HCT116 (cell line): ENCODE measurements at regions of chr9 and their contacts with region 1.

Region 1: DNA sequence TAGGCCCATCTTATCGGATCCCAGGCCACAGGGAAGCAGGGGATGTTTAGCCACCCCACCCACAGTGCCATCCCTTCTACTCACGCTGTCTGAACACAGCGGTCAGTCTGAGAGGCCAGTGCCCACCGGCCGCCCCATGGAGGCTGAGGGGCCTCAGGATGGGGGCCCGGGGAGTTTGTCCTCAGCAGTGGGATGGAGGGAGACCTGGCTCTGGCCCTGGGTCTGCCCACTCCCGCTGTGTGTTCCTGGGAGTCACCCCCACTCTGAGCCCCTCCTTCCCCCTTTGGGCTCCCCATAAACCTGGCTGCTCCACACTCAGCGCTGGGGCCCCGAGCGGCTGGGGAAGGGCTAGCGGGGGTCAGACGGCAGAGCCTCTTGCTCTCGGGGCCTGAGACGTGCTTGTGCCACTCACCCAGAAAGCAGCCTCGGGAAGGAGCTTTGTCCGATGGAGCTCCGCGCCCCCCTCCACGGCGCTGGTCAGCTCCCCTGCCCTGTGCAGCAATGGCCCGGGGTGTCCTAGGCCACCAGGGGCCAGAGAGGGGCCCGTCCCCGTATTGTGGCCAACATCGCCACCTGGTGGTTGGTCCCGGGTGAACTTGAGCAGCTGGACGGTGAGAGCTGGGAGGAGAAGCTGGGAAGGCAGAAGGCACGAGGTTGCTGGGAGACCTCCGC is 10.9 kb upstream of the LAMC3 start:
- DNase-seq: peak; percentile 60
- ATAC-seq: peak; percentile 93
- H3K4me3 ChIP-seq: no peak overlapping the region
- H3K27ac ChIP-seq: no peak overlapping the region
- H3K4me1 ChIP-seq: peaks cover 5 to 17% of the 10 kb centered on the region in 2 experiments; a peak in 3 of 4 replicates
- H3K27me3 ChIP-seq: no peaks in the 10 kb centered on the region; the same call in 1 of the 2 replicates
- CTCF ChIP-seq: peak; percentile 72 to 96 (median 90)
- POLR2A ChIP-seq: no peak
- RAD21 ChIP-seq: peak; percentile 98

Region 2: DNA sequence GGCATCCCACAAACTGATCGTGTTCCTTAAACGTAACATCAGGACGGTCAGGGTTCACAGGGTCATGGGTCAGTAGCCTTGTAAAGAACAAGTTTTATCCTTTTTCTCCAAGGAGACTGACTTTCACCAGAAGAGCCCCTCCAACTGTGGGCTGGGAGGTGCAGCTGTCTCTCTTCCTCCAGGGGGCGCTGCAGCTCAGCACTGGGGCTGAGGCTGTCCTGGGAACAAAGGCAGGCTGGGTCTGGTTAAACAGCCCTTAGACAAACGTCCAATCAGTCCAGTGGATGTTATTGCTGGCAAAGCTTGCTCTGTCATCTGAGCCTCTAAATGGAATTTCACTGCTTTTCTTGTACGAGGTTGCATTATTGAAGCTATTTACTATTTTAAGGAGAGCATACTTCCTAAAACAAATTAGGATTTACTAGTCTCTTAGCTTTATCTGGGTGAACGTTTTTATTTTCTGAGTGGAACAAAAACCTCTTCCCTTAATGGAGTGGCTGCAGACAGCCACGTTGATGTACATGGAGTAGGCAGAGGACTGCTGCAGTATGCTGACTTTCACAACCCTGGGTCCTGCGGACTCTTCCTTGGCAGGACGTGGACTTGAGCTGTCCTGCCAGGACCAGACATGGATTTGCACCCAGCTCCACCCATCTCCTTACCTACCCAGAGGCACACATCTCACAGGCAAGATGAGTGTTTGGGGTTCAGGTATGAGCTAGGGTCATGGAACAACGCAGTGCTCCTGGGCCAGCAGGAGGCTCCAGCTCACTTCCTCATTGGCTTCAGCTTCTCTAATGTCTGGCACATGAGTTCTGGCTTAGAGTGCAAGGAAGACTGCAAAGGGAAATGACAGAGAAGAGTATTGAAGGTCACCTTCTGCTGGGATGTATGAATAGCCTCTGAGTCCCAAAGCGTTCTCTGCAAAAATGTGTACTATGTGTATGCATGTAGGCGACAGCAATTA is 296.7 kb before region 1 on chr9:
- CTCF ChIA-PET with region 1: interaction called, 6 read pairs
- POLR2A ChIA-PET with region 1: no interaction called
- RAD21 ChIA-PET with region 1: no interaction called
- intact Hi-C with region 1: loop called (anchors 2 kb)
- DNase-seq: no peak
- ATAC-seq: peak; percentile 93
- H3K4me3 ChIP-seq: no peak overlapping the region
- H3K27ac ChIP-seq: no peak overlapping the region
- H3K4me1 ChIP-seq: peaks cover 3 to 7% of the 10 kb centered on the region in 2 experiments; a peak in 3 of 4 replicates
- H3K27me3 ChIP-seq: no peaks in the 10 kb centered on the region
- CTCF ChIP-seq: peak; percentile 65 to 99 (median 99); a peak in 5 of 6 replicates
- POLR2A ChIP-seq: no peak
- RAD21 ChIP-seq: peak; percentile 71

Region 3: DNA sequence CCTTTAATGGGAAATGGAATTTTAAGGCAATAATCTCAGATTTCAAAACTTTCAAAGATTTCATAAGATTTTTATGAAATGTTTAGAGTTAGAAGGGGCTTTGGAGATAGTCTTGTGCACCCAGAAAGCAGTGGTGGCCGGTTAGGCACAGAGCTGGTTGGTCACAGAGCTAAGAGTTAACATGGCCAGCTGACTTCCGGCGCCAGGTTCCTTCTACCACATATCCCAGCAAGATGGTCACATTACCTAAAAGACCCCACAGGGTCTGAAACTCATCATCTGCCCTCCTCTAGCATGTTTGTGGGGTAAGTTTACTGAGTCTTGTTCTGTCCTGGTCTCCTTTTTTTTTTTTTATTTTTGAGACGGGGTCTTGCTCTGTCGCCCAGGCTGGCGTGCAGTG is 120.8 kb before region 1 on chr9:
- CTCF ChIA-PET with region 1: interaction called, 58 read pairs
- POLR2A ChIA-PET with region 1: no interaction called
- RAD21 ChIA-PET with region 1: interaction called in 1 of 2 experiments, 3 read pairs
- intact Hi-C with region 1: no loop called
- DNase-seq: no peak
- ATAC-seq: no peak
- H3K4me3 ChIP-seq: no peak overlapping the region
- H3K27ac ChIP-seq: no peak overlapping the region
- H3K4me1 ChIP-seq: no peaks in the 10 kb centered on the region; a peak in 1 of 4 replicates
- H3K27me3 ChIP-seq: no peaks in the 10 kb centered on the region
- CTCF ChIP-seq: no peak
- POLR2A ChIP-seq: no peak
- RAD21 ChIP-seq: no peak

Region 4: DNA sequence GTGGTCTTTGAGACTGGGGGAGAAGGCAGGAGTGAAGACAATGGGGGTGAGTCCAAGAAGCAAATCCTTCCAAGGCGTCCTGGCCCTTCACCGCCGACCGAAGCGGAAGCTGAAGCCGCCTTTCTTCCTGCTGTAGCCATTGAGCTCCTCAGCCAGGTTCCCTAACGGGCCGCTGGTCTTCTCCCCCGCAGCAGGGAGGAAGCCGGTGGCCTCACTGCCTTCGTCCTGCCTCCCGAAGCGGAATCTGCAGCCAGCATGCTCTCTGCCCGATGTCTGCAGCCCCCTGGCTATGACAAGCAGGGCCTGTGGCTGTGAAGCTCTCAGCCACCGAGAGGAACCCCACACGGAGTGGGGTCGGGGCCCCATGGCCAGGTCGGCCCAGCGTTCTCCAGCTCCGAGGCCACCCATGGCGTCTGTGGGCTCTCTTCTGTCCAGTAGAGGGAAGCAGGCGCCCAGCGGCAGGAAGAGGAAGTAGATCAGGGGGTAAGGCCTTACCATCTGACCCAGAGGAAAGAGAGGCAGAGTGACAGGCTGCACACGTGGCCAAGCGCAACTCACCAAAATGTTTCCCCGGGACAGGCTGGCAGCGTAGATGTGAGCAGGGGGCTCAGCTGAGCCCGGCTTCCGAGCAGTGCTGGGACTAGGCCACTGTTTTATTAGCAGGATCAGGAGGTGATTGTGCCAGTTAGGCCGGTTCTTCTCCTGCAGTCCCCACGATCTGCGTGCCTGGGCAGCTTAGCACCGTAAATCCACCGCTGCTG is 104.5 kb before region 1 on chr9:
- CTCF ChIA-PET with region 1: interaction called, 21 read pairs
- POLR2A ChIA-PET with region 1: no interaction called
- RAD21 ChIA-PET with region 1: interaction called in 1 of 2 experiments, 3 read pairs
- intact Hi-C with region 1: loop called (anchors 2 kb)
- DNase-seq: no peak
- ATAC-seq: peak; percentile 39; the same call in 1 of the 2 replicates
- H3K4me3 ChIP-seq: no peak overlapping the region
- H3K27ac ChIP-seq: no peak overlapping the region
- H3K4me1 ChIP-seq: no peaks in the 10 kb centered on the region
- H3K27me3 ChIP-seq: no peaks in the 10 kb centered on the region
- CTCF ChIP-seq: peak; percentile 33 to 47 (median 46); a peak in 5 of 6 replicates
- POLR2A ChIP-seq: no peak
- RAD21 ChIP-seq: peak; percentile 80

Region 5: GRCh38 chr9:130927995-130928900 is 69.8 kb before region 1 on chr9:
- CTCF ChIA-PET with region 1: interaction called, 10 read pairs
- POLR2A ChIA-PET with region 1: no interaction called
- RAD21 ChIA-PET with region 1: interaction called, 3 to 4 read pairs
- intact Hi-C with region 1: no loop called
- DNase-seq: peak; percentile 55
- ATAC-seq: peak; percentile 69
- H3K4me3 ChIP-seq: peak overlapping the region; percentile 11 to 42; a peak in 2 of 4 replicates
- H3K27ac ChIP-seq: peak overlapping the region; percentile 81
- H3K4me1 ChIP-seq: peaks cover 29 to 33% of the 10 kb centered on the region in 2 experiments
- H3K27me3 ChIP-seq: no peaks in the 10 kb centered on the region
- CTCF ChIP-seq: no peak
- POLR2A ChIP-seq: no peak
- RAD21 ChIP-seq: no peak

Region 6: DNA sequence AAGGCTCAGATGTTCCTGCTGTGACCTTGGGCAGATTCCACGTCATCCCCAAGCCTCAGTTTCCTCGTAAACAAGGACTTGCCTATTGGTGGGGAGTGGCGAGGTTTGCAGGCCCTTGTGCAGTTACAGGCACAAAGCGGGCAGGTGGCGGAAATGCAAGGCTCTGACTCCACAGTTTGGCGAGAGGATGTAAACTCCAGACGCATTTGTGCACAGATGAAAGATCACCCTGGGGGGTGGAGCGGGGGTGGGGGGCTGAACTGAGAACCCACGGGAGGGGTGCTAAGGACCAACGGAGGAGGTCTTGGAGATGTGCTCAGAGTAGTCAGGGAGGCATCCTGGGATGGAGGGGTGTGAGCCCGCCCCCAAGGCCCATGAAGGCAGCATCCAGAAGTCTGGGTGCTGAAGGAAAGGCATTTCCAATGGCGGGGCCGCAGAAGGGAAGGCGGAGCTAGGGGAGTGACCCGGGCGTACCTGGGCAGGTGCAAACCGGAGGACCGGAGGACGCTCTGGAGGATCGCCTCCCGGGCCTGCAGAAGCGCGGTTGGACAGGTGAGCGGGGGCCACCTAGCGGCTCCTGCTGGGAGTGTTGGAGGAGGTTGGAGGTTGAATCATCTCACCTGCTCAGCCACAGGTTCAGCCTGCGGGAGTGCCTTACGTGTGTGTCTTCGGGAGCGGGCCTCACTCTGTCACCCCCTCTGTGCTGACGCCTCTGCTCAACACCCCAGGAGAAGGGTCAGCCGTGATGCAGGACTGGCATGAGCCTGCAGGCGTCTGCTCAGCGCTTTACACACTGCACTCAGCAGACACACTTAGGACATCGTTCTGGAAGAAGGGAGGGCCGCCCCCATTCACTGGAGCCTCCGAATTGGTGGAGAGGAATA is 57.1 kb before region 1 on chr9:
- CTCF ChIA-PET with region 1: interaction called, 5 read pairs
- POLR2A ChIA-PET with region 1: interaction called, 8 read pairs
- RAD21 ChIA-PET with region 1: interaction called, 3 to 4 read pairs
- intact Hi-C with region 1: loop called (anchors 1 kb)
- DNase-seq: peak; percentile 75
- ATAC-seq: peak; percentile 77
- H3K4me3 ChIP-seq: peak overlapping the region in 1 of 2 experiments; percentile 34; a peak in 3 of 4 replicates
- H3K27ac ChIP-seq: no peak overlapping the region
- H3K4me1 ChIP-seq: peaks cover 21 to 45% of the 10 kb centered on the region in 2 experiments
- H3K27me3 ChIP-seq: no peaks in the 10 kb centered on the region
- CTCF ChIP-seq: peak in 2 of 3 experiments; percentile 86 to 93; a peak in 4 of 6 replicates
- POLR2A ChIP-seq: no peak
- RAD21 ChIP-seq: no peak

Region 7: DNA sequence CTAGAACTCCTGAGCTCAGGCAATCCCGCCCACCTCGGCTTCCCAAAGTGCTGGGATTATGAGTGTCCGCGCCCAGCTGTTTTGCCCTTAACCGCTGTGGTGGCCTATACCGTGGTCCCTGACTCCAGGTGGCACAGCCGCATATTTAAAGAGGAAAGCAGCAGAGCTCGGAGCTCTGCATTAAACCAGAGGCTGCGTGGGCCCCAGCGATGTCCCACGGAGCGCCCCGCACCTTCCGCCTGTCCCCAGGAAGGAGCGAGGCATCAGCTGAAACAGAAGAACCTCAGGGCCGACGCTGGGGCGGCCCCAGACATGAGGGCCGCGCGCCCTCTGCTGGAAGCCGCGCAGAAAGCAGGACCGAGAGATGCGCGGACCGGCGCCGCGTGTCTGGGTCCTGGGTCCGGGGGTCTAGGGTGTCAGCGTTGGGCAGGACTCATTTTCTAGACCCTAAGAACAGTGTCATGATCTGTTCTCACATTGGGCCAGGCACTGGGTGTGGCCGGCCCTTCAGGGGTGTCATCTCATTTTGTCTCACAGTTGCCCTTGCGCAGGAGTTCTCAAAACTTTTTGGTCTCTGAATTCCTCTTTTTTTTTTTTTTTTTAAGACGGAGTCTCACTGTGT is 48.6 kb after region 1 on chr9:
- CTCF ChIA-PET with region 1: interaction called, 37 read pairs
- POLR2A ChIA-PET with region 1: no interaction called
- RAD21 ChIA-PET with region 1: interaction called, 3 to 14 read pairs
- intact Hi-C with region 1: no loop called
- DNase-seq: peak; percentile 37
- ATAC-seq: peak; percentile 89
- H3K4me3 ChIP-seq: peak overlapping the region; percentile 26 to 45
- H3K27ac ChIP-seq: 0 out of 2 replicates have a peak overlapping the region, but pooled peaks have one; percentile 27
- H3K4me1 ChIP-seq: peaks cover 12 to 22% of the 10 kb centered on the region in 2 experiments; a peak in 3 of 4 replicates
- H3K27me3 ChIP-seq: no peaks in the 10 kb centered on the region
- CTCF ChIP-seq: peak; percentile 91 to 93 (median 92)
- POLR2A ChIP-seq: no peak
- RAD21 ChIP-seq: peak; percentile 97

Region 8: DNA sequence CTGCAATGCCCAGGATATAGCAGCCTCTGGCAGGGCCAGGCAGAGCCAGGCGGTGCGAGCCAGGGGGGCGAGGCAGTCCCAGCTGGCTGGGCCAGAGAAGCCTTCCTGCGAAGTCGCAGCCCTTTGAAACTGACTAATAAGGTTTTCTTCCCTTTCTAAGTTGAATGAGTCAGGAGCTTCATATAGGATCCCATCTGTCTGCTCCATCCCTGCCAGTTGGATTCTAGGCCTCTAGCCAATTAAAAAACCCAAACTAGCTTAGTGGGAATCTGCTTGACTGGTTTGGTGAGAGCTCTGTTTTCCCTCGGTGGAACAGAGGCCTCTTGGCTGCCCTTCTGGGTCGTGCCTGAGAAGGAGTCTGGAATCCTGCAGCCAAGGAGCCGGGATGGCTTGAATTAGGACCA is 811.9 kb after region 1 on chr9:
- CTCF ChIA-PET with region 1: no interaction called
- POLR2A ChIA-PET with region 1: no interaction called
- RAD21 ChIA-PET with region 1: no interaction called
- intact Hi-C with region 1: no loop called
- DNase-seq: no peak
- ATAC-seq: no peak
- H3K4me3 ChIP-seq: no peak overlapping the region
- H3K27ac ChIP-seq: no peak overlapping the region
- H3K4me1 ChIP-seq: peaks cover 0 to 5% of the 10 kb centered on the region in 2 experiments; a peak in 1 of 4 replicates
- H3K27me3 ChIP-seq: no peaks in the 10 kb centered on the region
- CTCF ChIP-seq: no peak
- POLR2A ChIP-seq: no peak
- RAD21 ChIP-seq: no peak